Left ventricle myocardium inferior (tissue), 1 donor: ENCODE measurements at regions of chr4 and their contacts with region 1.

Region 1: DNA sequence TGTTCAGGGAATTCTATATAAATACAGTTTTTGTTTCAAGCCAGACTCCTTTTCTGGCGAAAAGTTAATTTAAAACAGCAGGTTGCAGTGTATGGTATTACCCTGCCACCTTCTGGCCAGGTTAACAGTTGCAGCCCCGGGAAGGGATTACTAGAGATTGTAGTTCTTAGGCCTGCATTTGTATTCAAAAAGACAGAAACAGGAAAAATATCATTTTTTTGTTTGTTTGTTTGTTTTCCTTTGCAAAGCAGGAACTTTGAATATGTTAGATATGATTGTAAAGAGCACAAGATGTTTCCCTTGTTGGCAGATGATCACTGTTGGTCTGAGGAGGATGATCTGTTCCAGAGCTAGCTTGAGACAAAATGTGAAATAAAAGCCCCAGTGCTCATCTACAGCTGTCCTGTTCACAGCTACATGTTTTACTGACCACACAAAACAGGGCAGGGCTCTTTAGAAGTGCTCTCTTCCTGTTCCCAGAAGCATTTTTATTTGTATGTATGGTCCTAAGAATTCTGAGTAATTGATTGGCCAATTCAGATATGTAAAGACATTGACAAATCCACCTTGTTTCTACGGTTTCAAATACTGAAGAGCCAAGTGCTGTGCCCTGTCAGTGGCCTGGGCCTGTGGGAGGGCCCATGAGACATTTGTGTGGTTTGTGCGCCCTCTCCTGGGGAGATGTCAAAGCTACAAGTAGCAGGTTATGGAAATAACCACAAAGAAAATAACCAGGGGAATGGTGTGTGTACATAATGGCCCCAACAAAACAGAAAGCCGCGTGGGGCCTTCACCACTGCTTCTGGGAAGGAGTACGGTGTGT is 57.9 kb downstream of the CLDN22 start:
- DNase-seq: peak; percentile 62
- H3K4me3 ChIP-seq: no peak overlapping the region
- H3K27ac ChIP-seq: peak overlapping the region; percentile 58
- H3K4me1 ChIP-seq: peaks cover 11% of the 10 kb centered on the region
- H3K27me3 ChIP-seq: no peaks in the 10 kb centered on the region
- CTCF ChIP-seq: peak; percentile 77

Region 2: GRCh38 chr4:182938205-182938645 is 323.9 kb before region 1 on chr4:
- intact Hi-C with region 1: loop called (anchors 5 kb)
- DNase-seq: peak; percentile 72
- H3K4me3 ChIP-seq: no peak overlapping the region
- H3K27ac ChIP-seq: no peak overlapping the region
- H3K4me1 ChIP-seq: no peaks in the 10 kb centered on the region
- H3K27me3 ChIP-seq: peaks cover 20% of the 10 kb centered on the region
- CTCF ChIP-seq: peak; percentile 95

Region 3: DNA sequence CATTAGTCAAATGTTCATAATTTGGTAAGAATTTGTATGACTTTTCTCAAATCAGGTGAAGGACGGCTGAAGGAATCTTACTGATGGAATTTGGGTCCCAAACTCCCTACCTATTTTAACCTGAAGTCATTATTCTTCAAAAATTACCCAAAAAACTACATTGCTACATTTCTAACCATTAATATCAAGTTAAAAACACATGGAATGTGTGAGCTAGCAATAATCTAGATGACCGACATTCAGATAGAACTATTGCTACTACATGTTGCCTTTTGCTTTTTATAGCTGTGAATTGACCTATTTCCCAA is 188.4 kb before region 1 on chr4:
- intact Hi-C with region 1: loop called (anchors 2 kb)
- DNase-seq: no peak
- H3K4me3 ChIP-seq: no peak overlapping the region
- H3K27ac ChIP-seq: no peak overlapping the region
- H3K4me1 ChIP-seq: no peaks in the 10 kb centered on the region
- H3K27me3 ChIP-seq: no peaks in the 10 kb centered on the region
- CTCF ChIP-seq: no peak

Region 4: DNA sequence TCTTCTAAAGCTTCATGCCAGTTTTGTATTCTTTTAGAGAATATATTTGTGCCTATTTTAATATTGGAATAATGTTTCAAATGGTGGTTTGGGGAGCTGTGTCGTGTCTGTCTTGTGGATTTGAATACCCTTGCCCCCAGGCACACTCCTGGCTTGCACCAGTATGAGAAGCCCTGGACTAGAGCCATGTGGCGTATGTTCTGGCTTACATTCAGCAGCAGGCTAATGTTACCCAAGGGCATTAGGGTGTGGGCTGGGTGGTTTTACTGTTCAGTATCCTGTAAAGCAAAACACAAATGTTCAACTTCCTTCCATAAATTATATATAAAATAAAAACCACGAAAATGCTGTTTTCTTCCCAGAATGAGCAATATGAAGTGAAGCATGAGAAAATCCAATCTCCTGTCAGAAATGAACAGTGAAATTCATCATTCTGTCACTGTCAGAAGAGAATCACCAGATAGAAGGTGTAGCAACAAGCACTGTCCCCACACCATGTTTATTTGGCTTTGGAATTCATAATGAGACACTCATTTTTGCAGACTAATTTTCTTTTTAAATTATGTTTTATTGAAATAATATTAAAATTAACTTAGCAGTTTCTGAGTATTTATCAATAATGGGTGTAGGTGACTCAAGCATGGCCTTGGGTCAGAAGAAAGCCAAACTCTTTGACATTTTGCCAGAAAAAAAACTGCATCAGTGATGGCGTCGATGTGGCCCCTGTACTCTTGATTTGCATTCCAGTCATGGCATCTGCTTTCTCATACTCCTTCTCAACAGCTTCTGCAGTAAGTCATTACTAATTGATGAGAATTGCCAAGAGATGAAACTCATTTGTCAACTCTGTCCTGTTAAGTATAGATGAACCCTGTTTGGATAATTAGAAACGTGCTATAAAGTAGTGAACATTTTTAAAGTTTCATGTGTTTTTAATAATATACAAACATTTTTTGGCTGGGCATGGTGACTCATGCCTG is 119.3 kb before region 1 on chr4:
- intact Hi-C with region 1: no loop called
- DNase-seq: peak; percentile 72
- H3K4me3 ChIP-seq: peak overlapping the region; percentile 13
- H3K27ac ChIP-seq: peak overlapping the region; percentile 66
- H3K4me1 ChIP-seq: peaks cover 90% of the 10 kb centered on the region
- H3K27me3 ChIP-seq: no peaks in the 10 kb centered on the region
- CTCF ChIP-seq: no peak